Thyroid gland (tissue), 4 donors: ENCODE measurements at regions of chr4 and their contacts with region 1.

Region 1: GRCh38 chr4:7719354-7720174 is 220.1 kb downstream of the AFAP1 start:
- DNase-seq: peak; percentile 54 to 59
- H3K4me3 ChIP-seq: no peak overlapping the region
- H3K27ac ChIP-seq: no peak overlapping the region
- H3K4me1 ChIP-seq: no peaks in the 10 kb centered on the region
- H3K27me3 ChIP-seq: no peaks in the 10 kb centered on the region
- CTCF ChIP-seq: peak; percentile 41 to 84 (median 66)
- POLR2A ChIP-seq: no peak

Region 2: DNA sequence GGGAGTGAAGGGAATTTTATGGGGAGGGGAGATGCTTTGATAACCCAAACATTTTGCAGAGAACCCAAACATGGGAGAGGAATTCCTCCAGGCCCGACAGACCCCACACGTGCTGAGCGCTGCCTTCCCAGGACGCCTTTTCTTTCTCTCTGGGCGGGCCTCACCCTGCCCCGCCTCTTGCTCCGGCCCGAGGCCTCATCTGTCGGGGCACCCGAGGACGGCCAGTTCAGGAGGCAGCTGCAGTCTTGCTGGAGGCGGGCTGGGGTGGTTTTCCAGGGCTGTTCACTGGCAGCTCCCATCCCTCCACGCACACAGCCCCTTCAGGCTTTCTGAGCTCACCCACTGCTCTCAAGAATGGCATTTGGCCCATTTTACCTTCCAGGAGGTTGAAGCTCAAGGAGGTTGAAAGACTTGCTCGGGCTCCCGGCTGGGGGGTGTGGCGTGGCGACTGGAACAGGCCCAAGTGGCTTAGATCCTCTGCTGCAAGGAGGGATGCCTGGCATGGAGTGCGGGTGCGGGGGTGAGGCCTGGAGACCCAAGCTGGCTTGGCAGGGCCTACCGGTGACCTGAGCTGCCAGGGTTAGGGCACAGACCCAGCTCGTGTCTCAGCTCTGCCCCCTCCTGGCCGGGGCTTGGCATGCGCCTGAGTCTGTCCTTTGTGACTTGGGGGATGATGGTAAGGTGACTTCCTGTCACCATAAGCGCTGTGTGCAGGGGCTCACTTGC is 384.1 kb before region 1 on chr4:
- intact Hi-C with region 1: loop called (anchors 10 kb)
- DNase-seq: peak; percentile 75 to 91
- H3K4me3 ChIP-seq: no peak overlapping the region
- H3K27ac ChIP-seq: peak overlapping the region in 1 of 3 donors; percentile 12
- H3K4me1 ChIP-seq: peaks cover 10% of the 10 kb centered on the region in 2 donors
- H3K27me3 ChIP-seq: no peaks in the 10 kb centered on the region
- CTCF ChIP-seq: peak; percentile 46 to 76 (median 63)
- POLR2A ChIP-seq: no peak